ENCODE measurements at regions of chr4 and their contacts with region 1.

Region 1: GRCh38 chr4:674172-675035 is at the starts of genes ATP5ME and MYL5:
- DNase-seq: peak; percentile 98
- H3K4me3 Mint-ChIP-seq: peak within 1 kb of the TSS; percentile 85
- H3K27ac Mint-ChIP-seq: peak within 1 kb of the TSS; percentile 80
- H3K4me1 Mint-ChIP-seq: peaks cover 13% of the 10 kb centered on the region
- H3K27me3 Mint-ChIP-seq: no peaks in the 10 kb centered on the region
- total RNA-seq, gene ATP5ME: 205 TPM
- total RNA-seq, gene MYL5: 14.0 to 16.2 TPM

Region 2: DNA sequence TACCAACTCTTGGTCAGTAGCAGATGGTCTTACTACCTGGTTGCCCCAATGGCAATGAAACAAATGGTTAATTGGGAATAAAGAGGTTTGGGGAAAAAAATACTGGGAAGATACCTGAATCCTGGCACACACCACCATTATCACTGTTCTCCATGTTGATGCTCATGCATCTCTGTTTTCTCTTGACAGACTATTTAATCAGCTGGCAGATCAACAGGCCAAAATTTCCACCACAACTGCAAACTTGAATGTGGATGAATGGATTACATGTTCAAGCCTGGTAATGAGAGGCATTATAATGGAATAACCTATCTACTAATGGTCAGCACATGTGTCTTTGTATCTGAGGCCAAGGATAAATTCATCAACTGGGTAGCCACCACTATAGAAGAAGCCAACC is 221.1 kb before region 1 on chr4:
- CTCF ChIA-PET with region 1: no interaction called
- POLR2A ChIA-PET with region 1: no interaction called
- DNase-seq: no peak
- H3K4me3 Mint-ChIP-seq: no peak overlapping the region
- H3K27ac Mint-ChIP-seq: no peak overlapping the region
- H3K4me1 Mint-ChIP-seq: no peaks in the 10 kb centered on the region
- H3K27me3 Mint-ChIP-seq: no peaks in the 10 kb centered on the region

Region 3: DNA sequence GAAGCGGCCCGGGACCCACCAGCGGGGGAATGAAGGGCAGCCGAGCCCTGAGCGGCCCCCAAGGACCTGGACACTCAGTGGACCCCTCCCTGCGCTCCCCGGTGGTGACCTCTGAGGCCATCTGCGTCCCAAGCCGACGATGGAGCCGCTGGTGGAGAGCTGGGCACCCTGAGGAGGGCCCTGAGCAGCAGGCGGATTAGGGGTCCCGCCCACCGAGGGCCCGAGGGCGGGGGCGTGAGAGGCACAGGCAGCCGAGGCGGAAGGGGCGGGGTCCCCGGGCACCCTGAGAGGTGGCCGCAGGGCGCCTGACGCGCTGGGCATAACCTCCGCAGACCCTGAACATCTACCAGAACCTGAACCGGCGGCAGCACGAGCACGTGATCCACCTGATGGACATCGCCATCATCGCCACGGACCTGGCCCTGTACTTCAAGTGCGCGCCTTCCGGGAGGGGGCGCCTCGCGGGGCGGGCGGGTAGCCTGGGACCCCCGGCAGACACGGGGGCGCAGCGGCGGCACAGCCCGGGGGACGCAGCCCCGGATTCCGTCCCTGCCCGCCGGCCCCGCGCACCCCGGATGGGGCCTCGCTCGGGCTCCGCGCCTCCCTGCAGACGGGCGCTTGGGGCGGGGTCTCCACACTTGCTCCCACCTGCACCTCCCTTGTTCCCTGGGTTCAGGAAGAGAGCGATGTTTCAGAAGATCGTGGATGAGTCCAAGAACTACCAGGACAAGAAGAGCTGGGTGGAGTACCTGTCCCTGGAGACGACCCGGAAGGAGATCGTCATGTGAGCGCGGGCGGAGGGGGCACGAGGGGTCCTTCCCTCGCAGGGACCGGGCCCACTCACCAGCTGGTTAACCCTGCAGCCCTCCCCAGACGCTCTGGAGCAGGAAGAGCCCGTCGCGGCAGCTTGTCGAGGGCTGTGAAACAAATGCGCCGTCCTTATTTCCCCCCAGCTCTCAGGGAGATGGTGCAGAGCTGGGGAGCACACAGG is 10.7 kb before region 1 on chr4:
- CTCF ChIA-PET with region 1: interaction called, 29 read pairs
- POLR2A ChIA-PET with region 1: interaction called, 40 read pairs
- DNase-seq: peak; percentile 78
- H3K4me3 Mint-ChIP-seq: peak overlapping the region; percentile 76
- H3K27ac Mint-ChIP-seq: peak overlapping the region; percentile 73
- H3K4me1 Mint-ChIP-seq: peaks cover 15% of the 10 kb centered on the region
- H3K27me3 Mint-ChIP-seq: no peaks in the 10 kb centered on the region

Region 4: DNA sequence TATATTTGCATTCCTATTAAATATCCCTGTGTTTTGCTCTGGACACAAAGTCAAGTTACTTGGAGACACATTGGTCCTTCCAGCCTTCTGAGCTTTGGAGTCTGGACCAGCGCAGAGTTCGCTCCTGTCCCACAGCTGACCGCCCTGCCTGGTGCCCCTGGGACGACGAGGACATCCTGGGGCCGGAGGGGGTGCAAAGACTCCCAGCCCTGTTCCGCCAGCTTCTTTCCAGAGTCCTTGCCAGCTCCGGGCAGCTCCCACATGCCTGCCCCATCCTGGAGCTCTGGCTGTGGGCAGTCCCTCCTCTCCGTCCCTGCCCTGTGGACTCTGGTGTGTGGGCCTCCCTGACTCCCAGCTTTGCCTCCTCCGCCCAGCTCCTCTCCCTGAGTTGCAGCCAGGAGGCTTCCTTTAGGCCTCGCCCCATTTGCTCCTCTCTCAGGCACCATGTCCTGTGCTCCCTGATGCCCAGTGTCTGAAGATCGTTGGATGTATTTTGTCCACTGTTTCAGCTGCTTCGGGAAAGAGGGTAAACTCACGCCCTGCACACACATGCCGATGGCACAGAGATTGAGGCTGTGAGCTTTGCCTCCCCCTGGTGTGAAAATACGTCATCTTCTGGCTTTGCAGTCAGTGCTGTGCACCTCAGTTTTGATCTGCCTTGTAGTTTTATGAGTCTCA is 26.3 kb after region 1 on chr4:
- CTCF ChIA-PET with region 1: interaction called, 7 read pairs
- POLR2A ChIA-PET with region 1: interaction called, 22 read pairs
- DNase-seq: no peak
- H3K4me3 Mint-ChIP-seq: no peak overlapping the region
- H3K27ac Mint-ChIP-seq: no peak overlapping the region
- H3K4me1 Mint-ChIP-seq: peaks cover 24% of the 10 kb centered on the region
- H3K27me3 Mint-ChIP-seq: no peaks in the 10 kb centered on the region

Measured in activated CD4-positive, alpha-beta memory T cell treated with anti-CD3 and anti-CD28 coated beads, Interleukin-2, amount 10 ng/mL, durations not matched to agents 7 days and 5 days (primary cell).